Panc1 (cell line): ENCODE measurements at regions of chr10 and their contacts with region 1.

Region 1: DNA sequence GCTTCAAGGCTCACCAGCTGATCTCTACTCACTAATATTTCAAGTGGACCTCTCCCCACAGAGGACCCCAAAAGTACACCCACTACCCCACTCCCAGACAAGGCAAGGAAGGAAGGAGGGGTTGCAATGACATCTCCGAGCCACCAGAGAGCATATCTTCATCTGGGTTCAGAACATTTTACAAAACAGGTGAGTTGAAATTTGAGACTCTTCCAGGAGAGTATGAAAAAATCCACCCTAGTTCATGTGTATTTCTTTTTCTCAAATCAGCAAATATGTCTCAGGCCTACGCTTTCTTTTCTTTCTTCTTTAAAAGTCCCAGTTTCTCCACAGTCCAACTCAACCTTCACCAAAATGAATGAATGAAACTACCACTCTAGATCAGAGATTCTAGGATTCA is 61.9 kb downstream of the SGMS1 start:
- DNase-seq: no peak
- ATAC-seq: peak; percentile 68; the same call in 1 of the 2 replicates
- H3K4me3 ChIP-seq: no peak overlapping the region
- H3K27ac ChIP-seq: no peak overlapping the region
- H3K4me1 ChIP-seq: peaks cover 13% of the 10 kb centered on the region
- H3K27me3 ChIP-seq: no peaks in the 10 kb centered on the region
- CTCF ChIP-seq: peak; percentile 79

Region 2: DNA sequence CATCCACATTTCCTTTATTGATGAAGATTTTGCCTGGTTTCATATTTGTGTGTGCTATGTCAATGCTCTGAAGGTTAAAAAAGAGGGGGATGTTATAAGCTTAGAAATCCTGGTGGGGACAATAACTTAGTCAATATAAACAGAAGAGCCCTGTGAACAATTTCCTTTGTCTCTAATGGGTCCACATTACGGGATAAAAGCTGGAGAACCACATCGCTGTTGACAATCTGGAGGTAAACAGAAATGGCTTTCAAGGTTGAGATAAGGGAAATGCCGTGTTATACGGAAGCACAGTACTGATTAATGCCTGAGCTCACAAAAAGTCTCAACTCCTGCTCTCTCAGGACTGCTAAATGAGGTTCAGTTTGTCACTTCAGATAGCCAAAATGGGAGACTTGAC is 327.3 kb before region 1 on chr10:
- CTCF ChIA-PET with region 1: interaction called, 13 read pairs
- POLR2A ChIA-PET with region 1: no interaction called
- in situ Hi-C with region 1: no loop called
- intact Hi-C with region 1: no loop called
- DNase-seq: no peak
- ATAC-seq: no peak
- H3K4me3 ChIP-seq: no peak overlapping the region
- H3K27ac ChIP-seq: no peak overlapping the region
- H3K4me1 ChIP-seq: no peaks in the 10 kb centered on the region
- H3K27me3 ChIP-seq: peaks cover 52% of the 10 kb centered on the region
- CTCF ChIP-seq: no peak